ENCODE measurements at regions of chr7 and their contacts with region 1.

Region 1: DNA sequence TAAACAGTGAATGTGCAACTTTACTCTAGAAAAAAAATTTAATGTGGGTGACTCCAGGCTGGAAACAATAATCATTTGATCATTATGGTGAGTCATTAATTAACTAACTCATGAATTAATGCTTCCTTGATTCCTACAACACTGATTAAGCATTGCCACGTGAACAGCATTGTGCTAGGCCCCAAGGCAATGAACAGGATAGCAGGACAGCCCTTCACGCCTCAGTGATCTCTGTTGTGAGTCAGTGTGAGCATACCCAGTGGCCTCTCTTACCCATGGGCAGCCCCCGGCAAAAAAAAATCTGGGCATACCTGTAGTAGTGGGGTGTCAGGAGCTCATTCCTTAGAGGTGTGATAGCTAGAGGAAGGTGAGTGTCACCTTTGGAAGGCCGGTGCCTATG is 76.0 kb downstream of the DENND2A start:
- DNase-seq: no peak
- H3K4me3 ChIP-seq: no peak overlapping the region
- H3K27ac ChIP-seq: no peak overlapping the region
- H3K4me1 ChIP-seq: peaks cover 0 to 13% (median 4%) of the 10 kb centered on the region in 4 donors
- H3K27me3 ChIP-seq: no peaks in the 10 kb centered on the region
- CTCF ChIP-seq: no peak
- EP300 ChIP-seq: no peak
- POLR2A ChIP-seq: no peak

Region 2: GRCh38 chr7:139669106-139670061 is 895.3 kb before region 1 on chr7:
- in situ Hi-C with region 1: no loop called
- intact Hi-C with region 1: loop called (anchors 5 kb)
- DNase-seq: no peak
- H3K4me3 ChIP-seq: no peak overlapping the region
- H3K27ac ChIP-seq: no peak overlapping the region
- H3K4me1 ChIP-seq: peaks cover 0 to 6% (median 2%) of the 10 kb centered on the region in 4 donors
- H3K27me3 ChIP-seq: no peaks in the 10 kb centered on the region
- CTCF ChIP-seq: no peak
- EP300 ChIP-seq: no peak
- POLR2A ChIP-seq: no peak

Region 3: GRCh38 chr7:140316165-140316661 is 248.4 kb before region 1 on chr7:
- in situ Hi-C with region 1: no loop called
- intact Hi-C with region 1: no loop called
- DNase-seq: peak; percentile 69
- H3K4me3 ChIP-seq: peak overlapping the region in 1 of 4 donors; percentile 14
- H3K27ac ChIP-seq: peak overlapping the region; percentile 67 to 80 (median 75)
- H3K4me1 ChIP-seq: peaks cover 13 to 40% (median 20%) of the 10 kb centered on the region in 4 donors
- H3K27me3 ChIP-seq: no peaks in the 10 kb centered on the region
- CTCF ChIP-seq: no peak
- EP300 ChIP-seq: peak; percentile 7
- POLR2A ChIP-seq: peak; percentile 17

Region 4: DNA sequence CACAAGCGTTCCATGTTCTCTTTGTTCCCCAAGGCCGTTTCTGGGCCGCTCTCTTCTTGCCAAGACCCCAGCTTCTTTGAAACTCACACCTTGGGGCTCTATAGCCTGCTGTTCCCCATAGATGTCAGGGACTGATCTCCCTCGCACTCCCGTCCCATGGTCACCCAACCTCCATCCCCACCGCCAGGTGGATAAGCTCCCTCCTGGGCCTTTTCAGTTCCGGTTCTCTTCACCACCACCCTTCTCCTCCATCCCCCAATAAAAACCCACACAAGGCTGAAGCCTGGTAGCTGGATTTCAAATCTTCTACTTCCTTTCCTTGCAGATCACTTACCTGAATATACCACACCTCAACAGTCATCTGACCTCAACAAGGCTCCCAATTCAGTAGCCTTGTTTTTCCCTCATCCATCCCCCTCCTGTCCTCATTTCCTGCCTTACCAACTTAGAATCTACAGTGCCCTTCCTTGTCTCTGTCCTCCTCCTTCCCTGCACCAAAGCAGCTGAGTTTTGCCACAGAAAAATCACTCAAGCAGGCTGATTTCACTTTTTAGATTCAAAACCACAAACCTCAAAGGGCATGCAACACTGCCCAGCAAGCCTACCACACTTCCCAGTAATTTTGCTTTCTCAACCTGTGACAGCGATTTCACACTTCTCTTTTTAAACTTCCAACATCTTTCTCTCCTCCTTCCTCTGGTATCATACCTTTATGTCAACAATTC is 174.0 kb before region 1 on chr7:
- in situ Hi-C with region 1: no loop called
- intact Hi-C with region 1: no loop called
- DNase-seq: no peak
- H3K4me3 ChIP-seq: no peak overlapping the region
- H3K27ac ChIP-seq: no peak overlapping the region
- H3K4me1 ChIP-seq: peaks cover 0 to 11% (median 0%) of the 10 kb centered on the region in 4 donors
- H3K27me3 ChIP-seq: no peaks in the 10 kb centered on the region
- CTCF ChIP-seq: no peak
- EP300 ChIP-seq: no peak
- POLR2A ChIP-seq: no peak

Region 5: GRCh38 chr7:140517546-140518369 is 46.9 kb before region 1 on chr7:
- in situ Hi-C with region 1: no loop called
- intact Hi-C with region 1: no loop called
- DNase-seq: peak; percentile 94
- H3K4me3 ChIP-seq: peak overlapping the region in 1 of 4 donors; percentile 36
- H3K27ac ChIP-seq: peak overlapping the region; percentile 89 to 91 (median 90)
- H3K4me1 ChIP-seq: peaks cover 10 to 23% (median 15%) of the 10 kb centered on the region in 4 donors
- H3K27me3 ChIP-seq: no peaks in the 10 kb centered on the region
- CTCF ChIP-seq: peak; percentile 73 to 95 (median 87)
- EP300 ChIP-seq: no peak
- POLR2A ChIP-seq: peak; percentile 21

Region 6: GRCh38 chr7:140773104-140773503 is 208.5 kb after region 1 on chr7:
- in situ Hi-C with region 1: no loop called
- intact Hi-C with region 1: no loop called
- DNase-seq: no peak
- H3K4me3 ChIP-seq: no peak overlapping the region
- H3K27ac ChIP-seq: no peak overlapping the region
- H3K4me1 ChIP-seq: no peaks in the 10 kb centered on the region
- H3K27me3 ChIP-seq: no peaks in the 10 kb centered on the region
- CTCF ChIP-seq: no peak
- EP300 ChIP-seq: no peak
- POLR2A ChIP-seq: no peak

Measured in transverse colon (tissue), 4 donors.